CD8-positive, alpha-beta T cell (primary cell): ENCODE measurements at regions of chr22 and their contacts with region 1.

Region 1: GRCh38 chr22:49948958-49949913 is 11.3 kb upstream of the PIM3 start:
- DNase-seq: no peak
- ATAC-seq: no peak
- H3K4me3 ChIP-seq: no peak overlapping the region
- H3K4me3 Mint-ChIP-seq: no peak overlapping the region
- H3K27ac ChIP-seq: no peak overlapping the region
- H3K27ac Mint-ChIP-seq: no peak overlapping the region
- H3K4me1 ChIP-seq: peaks cover 20% of the 10 kb centered on the region
- H3K4me1 Mint-ChIP-seq: peaks cover 11% of the 10 kb centered on the region
- H3K27me3 ChIP-seq: no peaks in the 10 kb centered on the region
- H3K27me3 Mint-ChIP-seq: no peaks in the 10 kb centered on the region
- CTCF ChIP-seq: no peak

Region 2: GRCh38 chr22:49960159-49961004 is 11.1 kb after region 1 on chr22 and contains the start of gene PIM3:
- CTCF ChIA-PET with region 1: no interaction called
- POLR2A ChIA-PET with region 1: interaction called, 3 read pairs
- intact Hi-C with region 1: loop called (anchors 1 kb)
- DNase-seq: peak; percentile 80 to 96 (median 90)
- ATAC-seq: peak; percentile 61
- H3K4me3 ChIP-seq: peak within 1 kb of the TSS; percentile 67 to 86
- H3K4me3 Mint-ChIP-seq: peak within 1 kb of the TSS; percentile 93
- H3K27ac ChIP-seq: peak within 1 kb of the TSS; percentile 71 to 80
- H3K27ac Mint-ChIP-seq: peak within 1 kb of the TSS; percentile 95
- H3K4me1 ChIP-seq: peaks cover 33% of the 10 kb centered on the region
- H3K4me1 Mint-ChIP-seq: peaks cover 17% of the 10 kb centered on the region
- H3K27me3 ChIP-seq: no peaks in the 10 kb centered on the region
- H3K27me3 Mint-ChIP-seq: no peaks in the 10 kb centered on the region
- CTCF ChIP-seq: no peak
- total RNA-seq, gene PIM3: 316 to 328 TPM